Naive thymus-derived CD4-positive, alpha-beta T cell (primary cell): ENCODE measurements at regions of chr16 and their contacts with region 1.

Region 1: DNA sequence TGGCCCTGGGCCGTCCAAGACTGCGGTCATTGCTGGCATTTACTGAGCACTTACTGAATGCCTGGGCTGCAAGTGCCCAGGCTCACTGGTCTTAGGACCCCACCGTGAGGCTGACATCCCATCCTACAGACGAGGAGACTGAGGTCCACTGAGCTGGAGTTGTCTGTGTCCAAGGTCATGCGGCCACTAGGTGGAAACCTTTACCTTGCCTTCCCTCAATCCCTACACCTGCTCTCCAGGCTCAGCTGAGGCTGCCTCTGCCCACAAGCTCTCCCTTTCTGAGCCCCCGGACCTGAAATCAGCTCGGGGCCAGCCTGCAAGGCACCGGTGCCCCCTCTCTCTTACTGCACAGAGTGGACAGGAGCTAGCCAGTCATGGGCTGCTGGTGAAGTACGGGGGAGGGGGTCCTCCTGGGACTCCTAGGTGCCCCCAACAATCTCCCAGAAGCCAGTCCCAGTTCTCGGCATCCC is 1.5 kb downstream of the CASKIN1 start:
- DNase-seq: peak in 7 of 9 donors; percentile 41 to 63 (median 55)
- ATAC-seq: peak; percentile 73
- H3K4me3 ChIP-seq: no peak overlapping the region
- H3K4me3 Mint-ChIP-seq: peak overlapping the region in 8 of 10 donors; percentile 34 to 79 (median 50)
- H3K27ac ChIP-seq: no peak overlapping the region
- H3K27ac Mint-ChIP-seq: peak overlapping the region in 1 of 9 donors; percentile 28
- H3K4me1 ChIP-seq: peaks cover 0 to 8% of the 10 kb centered on the region in 2 donors
- H3K4me1 Mint-ChIP-seq: peaks cover 0 to 6% (median 4%) of the 10 kb centered on the region in 7 donors
- H3K27me3 ChIP-seq: peaks cover 6 to 11% of the 10 kb centered on the region in 2 donors
- H3K27me3 Mint-ChIP-seq: peaks cover 14 to 38% (median 16%) of the 10 kb centered on the region in 5 donors

Region 2: DNA sequence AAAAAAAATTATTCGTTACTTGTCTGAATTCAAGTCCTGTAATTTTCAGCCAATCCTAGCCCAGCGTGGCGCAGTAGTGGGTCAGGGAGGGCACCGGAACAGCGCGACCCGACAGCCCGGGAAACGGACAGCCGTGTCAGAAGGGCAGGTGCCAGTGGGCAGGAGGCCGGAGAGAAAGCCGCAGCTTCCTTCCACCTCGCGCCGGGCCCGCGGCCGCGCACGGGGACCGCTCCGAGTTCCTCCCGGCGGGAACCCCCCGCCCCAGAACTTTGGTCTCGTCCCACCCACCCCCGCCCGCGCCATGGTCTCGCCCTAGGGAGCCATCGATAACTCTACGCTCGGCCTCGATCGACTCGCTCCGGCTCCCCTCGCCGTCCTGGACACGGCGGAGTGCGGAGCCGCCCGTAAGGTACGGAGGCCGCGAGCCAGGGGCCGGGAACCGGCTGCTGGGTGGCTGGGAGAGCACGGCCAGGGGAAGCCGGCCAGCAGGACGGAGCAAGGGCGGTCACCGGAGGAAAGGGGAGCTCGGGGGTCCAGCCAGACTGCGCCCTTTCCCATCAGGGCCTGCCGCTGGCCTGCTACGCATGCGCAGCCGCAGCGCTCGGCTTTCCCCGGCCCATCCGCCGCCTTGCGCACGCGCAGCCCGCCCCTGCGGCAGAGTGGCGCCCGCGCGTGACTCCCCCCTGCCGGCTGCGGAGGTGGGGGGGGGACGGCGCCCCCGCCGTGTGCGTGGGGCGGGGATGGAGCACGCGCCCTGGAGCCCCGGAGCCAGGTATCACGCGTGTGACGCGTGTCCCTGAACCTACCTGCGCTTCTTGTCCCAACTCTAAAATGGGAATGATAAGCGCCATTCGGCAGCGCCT is 10.4 kb after region 1 on chr16 and contains the start of gene MLST8:
- CTCF ChIA-PET with region 1: interaction called, 6 read pairs
- POLR2A ChIA-PET with region 1: interaction called, 9 read pairs
- intact Hi-C with region 1: loop called in 1 of 2 experiments (anchors 1 kb)
- DNase-seq: peak; percentile 88 to 100 (median 98)
- ATAC-seq: peak; percentile 97
- H3K4me3 ChIP-seq: peak within 1 kb of the TSS; percentile 93
- H3K4me3 Mint-ChIP-seq: peak within 1 kb of the TSS; percentile 80 to 95 (median 88)
- H3K27ac ChIP-seq: peak within 1 kb of the TSS; percentile 97
- H3K27ac Mint-ChIP-seq: peak within 1 kb of the TSS; percentile 70 to 91 (median 86)
- H3K4me1 ChIP-seq: peaks cover 11 to 13% of the 10 kb centered on the region in 2 donors
- H3K4me1 Mint-ChIP-seq: peaks cover 7 to 29% (median 21%) of the 10 kb centered on the region in 7 donors
- H3K27me3 ChIP-seq: no peaks in the 10 kb centered on the region
- H3K27me3 Mint-ChIP-seq: peaks cover 0 to 11% (median 0%) of the 10 kb centered on the region in 5 donors
- total RNA-seq, gene MLST8: 25.1 to 41.2 (median 35.5) TPM

Region 3: DNA sequence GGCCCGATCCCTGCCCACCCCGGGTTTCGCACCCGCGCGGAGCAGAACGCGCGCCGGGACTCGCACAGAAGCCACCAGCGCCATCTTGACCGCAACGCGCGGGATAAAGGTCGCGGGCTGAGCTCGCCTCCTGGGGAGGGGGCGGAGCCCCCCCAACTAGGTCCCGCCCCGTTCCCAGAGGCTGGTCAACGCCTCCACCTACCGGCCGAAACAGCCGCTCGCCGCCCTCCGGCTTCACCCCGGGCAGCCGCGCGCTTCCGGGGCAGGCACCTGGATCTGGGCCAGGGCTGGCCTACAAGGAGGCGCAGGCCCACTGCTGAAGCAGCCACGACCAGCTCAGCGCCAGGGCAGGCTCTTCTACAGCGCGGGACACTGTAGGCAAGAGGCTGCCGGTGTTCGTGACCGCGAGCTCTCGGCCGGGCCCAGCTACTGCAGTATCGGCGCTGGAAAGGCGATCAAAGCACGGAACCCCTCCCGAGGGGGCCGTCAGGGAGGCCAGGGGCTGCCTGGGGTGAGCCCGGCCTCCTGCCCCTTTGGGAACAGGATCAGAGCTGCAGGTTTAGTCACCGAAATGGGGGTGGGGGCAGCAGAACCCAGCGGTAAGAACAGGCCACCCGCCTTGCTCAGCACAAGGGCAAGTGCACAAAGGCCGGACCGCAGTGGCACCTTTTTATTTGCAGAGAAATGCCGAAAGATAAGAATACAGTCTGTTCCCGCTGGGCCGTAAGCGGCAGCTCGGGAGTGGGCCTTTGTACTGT is 56.8 kb after region 1 on chr16 and contains the start of gene ECI1:
- CTCF ChIA-PET with region 1: interaction called, 32 read pairs
- POLR2A ChIA-PET with region 1: interaction called, 8 read pairs
- intact Hi-C with region 1: loop called in 1 of 2 experiments (anchors 1 kb)
- DNase-seq: peak; percentile 48 to 90 (median 62)
- ATAC-seq: peak; percentile 91
- H3K4me3 ChIP-seq: peak within 1 kb of the TSS; percentile 62
- H3K4me3 Mint-ChIP-seq: peak within 1 kb of the TSS; percentile 85 to 94 (median 89)
- H3K27ac ChIP-seq: peak within 1 kb of the TSS; percentile 76
- H3K27ac Mint-ChIP-seq: peak within 1 kb of the TSS; percentile 85 to 94 (median 91)
- H3K4me1 ChIP-seq: peaks cover 7% of the 10 kb centered on the region in 2 donors
- H3K4me1 Mint-ChIP-seq: peaks cover 0 to 12% (median 7%) of the 10 kb centered on the region in 7 donors
- H3K27me3 ChIP-seq: no peaks in the 10 kb centered on the region
- H3K27me3 Mint-ChIP-seq: no peaks in the 10 kb centered on the region
- total RNA-seq, gene ECI1: 19.9 to 29.3 (median 26.8) TPM

Region 4: GRCh38 chr16:2340564-2341455 is 145.9 kb after region 1 on chr16 and contains the start of gene ABCA3:
- CTCF ChIA-PET with region 1: interaction called, 3 read pairs
- POLR2A ChIA-PET with region 1: no interaction called
- intact Hi-C with region 1: loop called (anchors 1 kb)
- DNase-seq: peak; percentile 85 to 100 (median 93)
- ATAC-seq: peak; percentile 96
- H3K4me3 ChIP-seq: peak within 1 kb of the TSS; percentile 62
- H3K4me3 Mint-ChIP-seq: peak within 1 kb of the TSS; percentile 78 to 91 (median 86)
- H3K27ac ChIP-seq: peak within 1 kb of the TSS; percentile 15
- H3K27ac Mint-ChIP-seq: peak within 1 kb of the TSS in 7 of 9 donors; percentile 31 to 82 (median 64)
- H3K4me1 ChIP-seq: peaks cover 6 to 9% of the 10 kb centered on the region in 2 donors
- H3K4me1 Mint-ChIP-seq: peaks cover 9 to 19% (median 16%) of the 10 kb centered on the region in 7 donors
- H3K27me3 ChIP-seq: no peaks in the 10 kb centered on the region
- H3K27me3 Mint-ChIP-seq: peaks cover 0 to 40% (median 0%) of the 10 kb centered on the region in 5 donors
- total RNA-seq, gene ABCA3: 7.0 to 10.0 (median 8.1) TPM

Region 5: GRCh38 chr16:2500918-2501750 is 306.2 kb after region 1 on chr16:
- CTCF ChIA-PET with region 1: interaction called, 20 read pairs
- POLR2A ChIA-PET with region 1: interaction called, 4 read pairs
- intact Hi-C with region 1: loop called in 1 of 2 experiments (anchors 1 kb)
- DNase-seq: peak; percentile 64 to 85 (median 74)
- ATAC-seq: peak; percentile 97
- H3K4me3 ChIP-seq: no peak overlapping the region
- H3K4me3 Mint-ChIP-seq: no peak overlapping the region
- H3K27ac ChIP-seq: no peak overlapping the region
- H3K27ac Mint-ChIP-seq: no peak overlapping the region
- H3K4me1 ChIP-seq: no peaks in the 10 kb centered on the region
- H3K4me1 Mint-ChIP-seq: peaks cover 0 to 3% (median 0%) of the 10 kb centered on the region in 7 donors
- H3K27me3 ChIP-seq: no peaks in the 10 kb centered on the region
- H3K27me3 Mint-ChIP-seq: no peaks in the 10 kb centered on the region